CD8-positive, alpha-beta T cell (primary cell): ENCODE measurements at regions of chr11 and their contacts with region 1.

Region 1: GRCh38 chr11:85752890-85753581 is 57.9 kb downstream of the SYTL2 start:
- DNase-seq: peak; percentile 73 to 99 (median 87)
- ATAC-seq: peak; percentile 80
- H3K4me3 ChIP-seq: peak overlapping the region in 1 of 2 experiments; percentile 9
- H3K4me3 Mint-ChIP-seq: peak overlapping the region; percentile 74
- H3K27ac ChIP-seq: peak overlapping the region; percentile 47 to 83
- H3K27ac Mint-ChIP-seq: peak overlapping the region; percentile 95
- H3K4me1 ChIP-seq: peaks cover 84% of the 10 kb centered on the region
- H3K4me1 Mint-ChIP-seq: peaks cover 93% of the 10 kb centered on the region
- H3K27me3 ChIP-seq: no peaks in the 10 kb centered on the region
- H3K27me3 Mint-ChIP-seq: no peaks in the 10 kb centered on the region
- CTCF ChIP-seq: no peak

Region 2: GRCh38 chr11:85627998-85628770 is 124.9 kb before region 1 on chr11 and contains the start of gene TMEM126B:
- CTCF ChIA-PET with region 1: no interaction called
- POLR2A ChIA-PET with region 1: no interaction called
- intact Hi-C with region 1: loop called in 1 of 2 experiments (anchors 1 kb)
- DNase-seq: peak; percentile 89 to 97 (median 96)
- ATAC-seq: peak; percentile 97
- H3K4me3 ChIP-seq: peak within 1 kb of the TSS; percentile 80 to 91
- H3K4me3 Mint-ChIP-seq: peak within 1 kb of the TSS; percentile 91
- H3K27ac ChIP-seq: peak within 1 kb of the TSS; percentile 76 to 83
- H3K27ac Mint-ChIP-seq: peak within 1 kb of the TSS; percentile 96
- H3K4me1 ChIP-seq: peaks cover 14% of the 10 kb centered on the region
- H3K4me1 Mint-ChIP-seq: peaks cover 51% of the 10 kb centered on the region
- H3K27me3 ChIP-seq: peaks cover 0 to 1% of the 10 kb centered on the region in 2 experiments
- H3K27me3 Mint-ChIP-seq: no peaks in the 10 kb centered on the region
- CTCF ChIP-seq: no peak
- total RNA-seq, gene TMEM126B: 16.2 to 19.9 TPM

Region 3: GRCh38 chr11:85682330-85683305 is 70.4 kb before region 1 on chr11:
- CTCF ChIA-PET with region 1: no interaction called
- POLR2A ChIA-PET with region 1: no interaction called
- intact Hi-C with region 1: loop called in 1 of 2 experiments (anchors 1 kb)
- DNase-seq: peak; percentile 33 to 80 (median 64)
- ATAC-seq: peak; percentile 81
- H3K4me3 ChIP-seq: peak overlapping the region; percentile 67 to 73
- H3K4me3 Mint-ChIP-seq: peak overlapping the region; percentile 84
- H3K27ac ChIP-seq: peak overlapping the region; percentile 2 to 41
- H3K27ac Mint-ChIP-seq: peak overlapping the region; percentile 79
- H3K4me1 ChIP-seq: no peaks in the 10 kb centered on the region
- H3K4me1 Mint-ChIP-seq: peaks cover 8% of the 10 kb centered on the region
- H3K27me3 ChIP-seq: no peaks in the 10 kb centered on the region
- H3K27me3 Mint-ChIP-seq: no peaks in the 10 kb centered on the region
- CTCF ChIP-seq: no peak

Region 4: GRCh38 chr11:85718991-85719807 is 33.8 kb before region 1 on chr11:
- CTCF ChIA-PET with region 1: no interaction called
- POLR2A ChIA-PET with region 1: no interaction called
- intact Hi-C with region 1: loop called in 1 of 2 experiments (anchors 5 kb)
- DNase-seq: no peak
- ATAC-seq: no peak
- H3K4me3 ChIP-seq: no peak overlapping the region
- H3K4me3 Mint-ChIP-seq: no peak overlapping the region
- H3K27ac ChIP-seq: no peak overlapping the region
- H3K27ac Mint-ChIP-seq: no peak overlapping the region
- H3K4me1 ChIP-seq: no peaks in the 10 kb centered on the region
- H3K4me1 Mint-ChIP-seq: peaks cover 2% of the 10 kb centered on the region
- H3K27me3 ChIP-seq: no peaks in the 10 kb centered on the region
- H3K27me3 Mint-ChIP-seq: no peaks in the 10 kb centered on the region
- CTCF ChIP-seq: no peak

Region 5: DNA sequence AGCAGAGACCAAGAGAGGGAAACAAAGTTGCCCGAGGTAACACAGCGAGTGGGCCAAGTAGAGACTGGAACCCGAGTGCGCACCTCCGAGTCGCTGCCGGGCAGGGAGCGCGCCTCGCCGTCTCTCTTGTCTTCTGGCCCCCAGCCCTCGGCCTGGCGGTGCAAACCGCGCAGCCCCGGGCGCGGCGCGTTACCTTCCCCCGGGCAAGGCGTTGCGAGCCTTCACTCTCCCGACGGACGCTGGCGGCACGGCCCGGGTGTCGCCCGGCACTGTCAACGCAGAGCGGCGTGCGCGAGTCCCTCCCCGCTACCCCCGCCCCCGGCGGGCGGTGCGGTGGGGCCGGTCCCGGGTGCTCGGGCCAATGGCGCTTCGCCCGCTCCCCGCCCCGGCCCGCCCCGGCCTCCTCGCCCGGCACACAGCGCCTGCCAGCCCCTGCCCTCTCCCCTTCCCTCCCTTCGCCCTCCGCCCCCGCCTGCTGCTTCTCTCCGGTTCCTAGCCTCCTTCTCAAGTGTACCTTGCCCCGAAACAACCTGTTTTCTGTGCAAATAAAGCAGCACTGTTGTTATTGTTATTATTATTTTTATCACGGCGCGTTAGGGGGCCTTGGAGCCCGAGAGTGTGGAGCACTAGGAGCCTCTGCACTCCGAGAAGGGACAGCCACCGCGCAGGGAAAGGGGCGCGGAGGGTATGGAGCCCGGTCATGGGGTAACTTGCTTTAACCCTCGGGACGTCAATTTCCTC is 58.0 kb after region 1 on chr11 and contains the start of gene SYTL2:
- CTCF ChIA-PET with region 1: interaction called, 3 read pairs
- POLR2A ChIA-PET with region 1: interaction called, 7 read pairs
- intact Hi-C with region 1: loop called (anchors 1 to 2 kb)
- DNase-seq: peak; percentile 53 to 89 (median 74)
- ATAC-seq: peak; percentile 78
- H3K4me3 ChIP-seq: peak within 1 kb of the TSS; percentile 68 to 85
- H3K4me3 Mint-ChIP-seq: peak within 1 kb of the TSS; percentile 93
- H3K27ac ChIP-seq: peak within 1 kb of the TSS; percentile 50 to 56
- H3K27ac Mint-ChIP-seq: peak within 1 kb of the TSS; percentile 93
- H3K4me1 ChIP-seq: peaks cover 19% of the 10 kb centered on the region
- H3K4me1 Mint-ChIP-seq: peaks cover 48% of the 10 kb centered on the region
- H3K27me3 ChIP-seq: no peaks in the 10 kb centered on the region
- H3K27me3 Mint-ChIP-seq: peaks cover 2% of the 10 kb centered on the region
- CTCF ChIP-seq: no peak
- total RNA-seq, gene SYTL2: 37.2 to 43.6 TPM

Region 6: DNA sequence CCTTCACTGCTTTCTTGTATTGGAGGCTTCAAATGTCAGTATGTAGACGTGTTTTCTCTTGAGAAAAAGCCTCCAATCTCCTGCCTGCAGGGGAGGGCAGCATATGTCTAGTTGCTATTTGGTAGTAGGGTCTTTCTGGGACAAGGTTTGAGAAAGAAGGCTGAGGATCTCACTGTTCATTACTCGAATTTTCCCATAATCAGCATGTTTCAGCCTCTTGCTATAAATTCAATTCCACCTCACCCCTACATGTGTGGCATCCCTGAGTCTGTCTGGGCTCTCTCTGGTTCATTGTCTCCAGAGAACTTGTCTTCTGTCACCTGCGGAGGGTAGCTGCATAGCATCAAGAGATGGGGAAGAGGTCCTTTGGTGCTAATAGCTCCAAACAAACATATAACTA is 82.7 kb after region 1 on chr11:
- CTCF ChIA-PET with region 1: no interaction called
- POLR2A ChIA-PET with region 1: no interaction called
- intact Hi-C with region 1: no loop called
- DNase-seq: no peak
- ATAC-seq: no peak
- H3K4me3 ChIP-seq: no peak overlapping the region
- H3K4me3 Mint-ChIP-seq: no peak overlapping the region
- H3K27ac ChIP-seq: no peak overlapping the region
- H3K27ac Mint-ChIP-seq: no peak overlapping the region
- H3K4me1 ChIP-seq: no peaks in the 10 kb centered on the region
- H3K4me1 Mint-ChIP-seq: no peaks in the 10 kb centered on the region
- H3K27me3 ChIP-seq: no peaks in the 10 kb centered on the region
- H3K27me3 Mint-ChIP-seq: no peaks in the 10 kb centered on the region
- CTCF ChIP-seq: no peak

Region 7: DNA sequence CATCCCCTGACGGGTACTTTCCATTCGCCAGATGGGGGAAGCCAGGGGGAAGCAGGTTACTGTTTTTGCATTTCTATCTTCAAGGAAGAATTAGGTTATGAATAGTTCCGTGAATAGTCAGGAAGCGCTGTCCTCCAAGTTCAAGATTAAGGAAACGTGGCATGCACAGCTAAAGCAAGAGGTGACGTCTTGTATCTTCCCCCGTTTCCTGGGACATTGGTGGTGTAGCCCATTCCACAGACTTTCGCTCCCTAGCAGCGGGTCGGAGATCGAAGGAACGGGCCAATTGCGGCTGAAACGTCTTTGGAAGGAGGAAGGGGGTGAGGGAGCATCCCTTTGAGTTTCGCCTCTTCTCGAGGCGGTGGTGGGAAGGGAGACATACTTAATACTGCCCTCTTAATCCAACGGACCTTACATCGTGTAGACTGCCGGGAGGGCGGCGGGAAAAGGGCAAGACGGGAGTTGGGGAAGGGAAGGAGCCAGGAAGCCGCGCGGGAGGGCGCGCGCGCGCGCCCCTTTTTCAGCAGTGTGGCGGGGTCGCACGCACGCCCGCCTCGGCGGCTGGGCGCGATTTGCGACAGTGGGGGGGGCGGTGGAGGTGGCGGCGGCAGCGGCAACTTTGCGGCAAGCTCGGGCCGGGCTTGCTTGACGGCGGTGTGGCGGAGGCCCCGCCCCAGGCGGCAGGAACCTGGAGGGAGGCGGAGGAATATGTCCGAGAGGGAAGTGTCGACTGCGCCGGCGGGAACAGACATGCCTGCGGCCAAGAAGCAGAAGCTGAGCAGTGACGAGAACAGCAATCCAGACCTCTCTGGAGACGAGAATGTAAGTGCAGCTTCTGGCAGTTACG is 491.7 kb after region 1 on chr11 and contains the start of gene EED:
- CTCF ChIA-PET with region 1: no interaction called
- POLR2A ChIA-PET with region 1: no interaction called
- intact Hi-C with region 1: loop called in 1 of 2 experiments (anchors 1 kb)
- DNase-seq: peak; percentile 88 to 97 (median 94)
- ATAC-seq: peak; percentile 85
- H3K4me3 ChIP-seq: peak within 1 kb of the TSS; percentile 100
- H3K4me3 Mint-ChIP-seq: no peak within 1 kb of the TSS
- H3K27ac ChIP-seq: peak within 1 kb of the TSS; percentile 97 to 99
- H3K27ac Mint-ChIP-seq: no peak within 1 kb of the TSS
- H3K4me1 ChIP-seq: peaks cover 25% of the 10 kb centered on the region
- H3K4me1 Mint-ChIP-seq: peaks cover 27% of the 10 kb centered on the region
- H3K27me3 ChIP-seq: no peaks in the 10 kb centered on the region
- H3K27me3 Mint-ChIP-seq: no peaks in the 10 kb centered on the region
- CTCF ChIP-seq: no peak
- total RNA-seq, gene EED: 23.5 to 24.7 TPM